Common myeloid progenitor, CD34-positive (primary cell): ENCODE measurements at regions of chr11 and their contacts with region 1.

Region 1: DNA sequence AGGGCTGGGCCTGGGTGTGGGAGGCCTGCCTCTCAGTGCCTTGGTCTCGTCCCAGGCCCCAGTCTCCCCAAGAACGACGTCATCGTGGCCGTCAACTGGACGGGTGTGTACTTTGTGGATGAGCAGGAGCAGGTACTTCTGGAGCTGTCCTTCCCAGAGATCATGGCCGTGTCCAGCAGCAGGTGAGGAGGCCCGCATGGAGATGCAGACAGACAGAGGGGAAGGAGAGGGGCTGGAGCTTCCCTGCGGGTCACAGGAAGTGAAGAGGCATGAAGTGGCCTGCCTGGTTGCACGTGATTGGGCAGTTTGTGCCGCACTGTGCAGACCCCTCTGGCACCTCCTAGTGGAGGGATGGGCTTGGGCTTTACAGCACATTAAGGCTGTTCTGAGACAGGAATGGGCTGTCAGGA is 70.4 kb downstream of the MYO7A start:
- DNase-seq: peak; percentile 27 to 46 (median 45)
- H3K4me3 ChIP-seq: no peak overlapping the region
- H3K27ac ChIP-seq: no peak overlapping the region
- H3K4me1 ChIP-seq: peaks cover 0 to 4% (median 0%) of the 10 kb centered on the region in 4 experiments
- H3K27me3 ChIP-seq: no peaks in the 10 kb centered on the region

Region 2: DNA sequence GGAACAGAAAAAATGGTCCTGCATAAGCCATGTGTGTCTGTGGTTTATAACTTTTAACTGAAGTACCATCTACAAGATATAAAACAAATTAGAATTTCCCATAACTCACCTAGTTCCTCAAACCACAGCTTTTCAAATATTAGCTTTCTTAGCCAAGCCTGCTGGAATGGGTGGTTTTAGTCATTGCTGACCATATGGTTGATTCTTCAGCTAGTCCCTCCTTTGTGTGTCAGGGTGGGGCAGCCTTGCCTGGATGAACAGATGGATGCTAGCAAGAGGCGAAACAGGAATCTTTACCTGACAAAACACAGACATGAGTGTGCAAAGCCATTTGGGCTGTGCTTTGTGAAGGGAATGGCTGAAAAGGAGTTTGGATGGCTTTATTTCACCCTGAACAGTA is 171.2 kb before region 1 on chr11:
- CTCF ChIA-PET with region 1: no interaction called
- POLR2A ChIA-PET with region 1: no interaction called
- DNase-seq: no peak
- H3K4me3 ChIP-seq: no peak overlapping the region
- H3K27ac ChIP-seq: no peak overlapping the region
- H3K4me1 ChIP-seq: no peaks in the 10 kb centered on the region
- H3K27me3 ChIP-seq: peaks cover 0 to 7% (median 2%) of the 10 kb centered on the region in 5 experiments

Region 3: GRCh38 chr11:77557554-77557953 is 359.1 kb after region 1 on chr11:
- CTCF ChIA-PET with region 1: interaction called, 14 read pairs
- POLR2A ChIA-PET with region 1: no interaction called
- DNase-seq: peak; percentile 6 to 33 (median 32)
- H3K4me3 ChIP-seq: no peak overlapping the region
- H3K27ac ChIP-seq: no peak overlapping the region
- H3K4me1 ChIP-seq: no peaks in the 10 kb centered on the region
- H3K27me3 ChIP-seq: no peaks in the 10 kb centered on the region